AG04450 (cell line): ENCODE measurements at regions of chr2 and their contacts with region 1.

Region 1: GRCh38 chr2:234500394-234501006 is 3.6 kb upstream of the ARL4C start:
- DNase-seq: no peak
- H3K4me3 ChIP-seq: no peak overlapping the region
- H3K27ac ChIP-seq: no peak overlapping the region
- H3K27me3 ChIP-seq: no peaks in the 10 kb centered on the region
- CTCF ChIP-seq: peak; percentile 64

Region 2: GRCh38 chr2:234288974-234289455 is 211.5 kb before region 1 on chr2:
- CTCF ChIA-PET with region 1: interaction called, 18 read pairs
- POLR2A ChIA-PET with region 1: interaction called, 4 read pairs
- DNase-seq: no peak
- H3K4me3 ChIP-seq: no peak overlapping the region
- H3K27ac ChIP-seq: peak overlapping the region; percentile 2
- H3K27me3 ChIP-seq: no peaks in the 10 kb centered on the region
- CTCF ChIP-seq: peak; percentile 80

Region 3: DNA sequence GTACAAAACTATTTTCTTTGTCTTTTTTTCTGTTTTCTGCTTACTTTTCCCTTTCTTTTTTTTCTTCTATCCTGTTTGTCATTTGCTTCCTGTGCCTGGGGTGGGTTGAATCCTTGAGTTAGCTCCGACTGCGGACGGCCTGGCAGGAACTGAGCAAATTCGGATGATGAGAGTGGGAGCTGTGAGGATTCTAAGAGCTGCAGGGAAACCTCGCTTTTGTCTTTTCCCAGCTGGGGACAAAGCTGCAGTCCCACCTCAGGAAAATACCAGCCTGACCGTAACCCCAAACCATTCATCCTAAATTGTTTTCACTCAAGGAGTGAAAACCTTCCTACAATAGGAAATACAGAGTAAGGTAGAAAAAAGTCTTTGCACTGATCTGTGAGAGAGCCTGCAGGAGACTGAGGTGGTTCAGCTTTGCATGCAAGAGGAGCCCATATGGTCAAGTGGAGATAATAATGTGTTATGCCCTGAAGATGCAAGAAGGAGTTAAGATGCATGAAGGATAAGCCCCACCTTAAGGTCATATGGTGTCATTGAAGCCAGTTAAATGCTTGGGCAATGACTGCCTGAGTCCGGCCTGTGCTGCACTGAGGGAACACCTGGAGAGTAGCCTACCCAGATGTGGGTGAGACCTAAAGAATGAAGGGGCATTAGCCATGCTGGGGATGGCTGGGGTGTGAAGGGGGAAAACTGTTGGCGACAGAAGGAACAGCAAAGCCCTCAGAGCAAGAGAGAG is 28.1 kb after region 1 on chr2:
- CTCF ChIA-PET with region 1: no interaction called
- POLR2A ChIA-PET with region 1: no interaction called
- DNase-seq: no peak
- H3K4me3 ChIP-seq: no peak overlapping the region
- H3K27ac ChIP-seq: no peak overlapping the region
- H3K27me3 ChIP-seq: peaks cover 14% of the 10 kb centered on the region
- CTCF ChIP-seq: no peak